Left cardiac atrium (tissue), 4 donors: ENCODE measurements at regions of chr1 and their contacts with region 1.

Region 1: GRCh38 chr1:210311726-210312493 is 16.8 kb upstream of the HHAT start:
- DNase-seq: peak; percentile 48
- ATAC-seq: peak; percentile 72 to 78

Region 2: DNA sequence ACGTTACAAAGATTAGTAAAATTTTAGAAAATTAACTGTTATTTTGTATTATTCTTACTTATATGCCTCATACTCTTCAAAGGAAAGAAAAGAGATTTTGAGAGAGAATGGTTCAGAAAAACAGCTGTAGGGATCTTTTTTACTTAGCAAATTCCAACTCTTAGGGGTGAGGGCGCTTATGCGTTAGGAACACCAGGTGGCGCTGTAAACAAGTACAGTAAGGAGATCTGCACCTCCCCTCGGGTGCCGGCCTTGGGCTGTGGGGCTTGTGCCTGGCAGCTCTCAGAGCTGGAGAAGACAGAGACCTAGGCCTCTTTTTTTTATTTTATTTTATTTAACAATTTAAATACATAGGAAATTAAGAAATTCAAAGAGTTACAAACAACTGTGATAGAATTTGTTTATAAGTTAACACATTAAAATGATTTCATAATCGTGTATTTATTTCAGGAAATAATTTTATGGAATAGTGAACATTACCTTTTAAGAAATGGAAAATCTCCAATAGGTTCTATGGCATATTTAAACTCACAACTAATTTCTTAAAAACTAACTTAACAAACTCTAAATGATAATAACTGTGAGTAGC is 451.5 kb before region 1 on chr1:
- intact Hi-C with region 1: loop called in 1 of 2 experiments (anchors 10 kb)
- DNase-seq: peak; percentile 80
- ATAC-seq: peak in 1 of 2 donors; percentile 85

Region 3: GRCh38 chr1:210246447-210246846 is 65.5 kb before region 1 on chr1:
- intact Hi-C with region 1: loop called in 1 of 2 experiments (anchors 5 kb)
- DNase-seq: no peak
- ATAC-seq: no peak